Panc1 (cell line): ENCODE measurements at regions of chrX and their contacts with region 1.

Region 1: DNA sequence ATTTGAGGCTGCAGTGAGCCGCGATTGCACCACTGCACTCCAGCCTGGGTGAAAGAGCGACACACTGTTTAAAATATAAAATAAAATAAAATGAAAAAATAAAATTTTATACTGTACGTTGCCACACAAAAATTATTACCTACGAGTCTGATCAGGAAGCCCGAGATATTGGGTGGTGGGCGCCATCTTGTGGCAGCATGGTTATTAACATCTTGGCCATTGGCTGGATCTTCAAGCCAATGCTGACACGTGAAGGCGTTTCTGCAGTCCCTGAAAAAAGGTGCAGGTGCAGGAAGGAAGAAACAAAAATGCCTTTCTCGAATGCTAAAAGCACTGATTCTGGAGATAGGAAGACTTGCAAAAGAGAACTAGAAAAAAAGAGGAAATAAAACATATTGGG is 4.9 kb upstream of the TLR8 start:
- DNase-seq: no peak
- ATAC-seq: peak; percentile 62; the same call in 1 of the 2 replicates
- H3K4me3 ChIP-seq: no peak overlapping the region
- H3K27ac ChIP-seq: no peak overlapping the region
- H3K4me1 ChIP-seq: no peaks in the 10 kb centered on the region
- H3K27me3 ChIP-seq: no peaks in the 10 kb centered on the region
- CTCF ChIP-seq: peak; percentile 78

Region 2: DNA sequence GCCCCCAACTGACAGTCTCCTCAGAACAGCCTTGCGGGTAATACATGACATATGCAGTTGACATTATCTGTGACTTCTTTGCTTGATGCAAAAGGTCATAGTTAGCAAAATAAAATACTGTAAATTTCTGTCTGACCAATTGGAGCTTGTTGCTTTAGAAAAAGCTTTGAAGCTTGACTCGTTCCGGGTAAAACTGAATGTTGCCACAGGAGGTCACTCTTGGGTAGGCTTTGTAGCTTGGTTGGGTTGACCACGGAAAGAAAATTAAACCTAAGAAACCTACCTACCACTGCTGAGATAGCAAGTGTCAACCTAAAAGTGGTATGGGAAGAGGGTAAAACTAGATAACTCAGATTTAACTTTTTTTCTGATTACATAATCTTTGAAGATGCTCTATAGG is 87.1 kb before region 1 on chrX:
- CTCF ChIA-PET with region 1: no interaction called
- POLR2A ChIA-PET with region 1: no interaction called
- in situ Hi-C with region 1: no loop called
- intact Hi-C with region 1: loop called (anchors 5 kb)
- DNase-seq: peak; percentile 32
- ATAC-seq: no peak; the same call in 1 of the 2 replicates
- H3K4me3 ChIP-seq: no peak overlapping the region
- H3K27ac ChIP-seq: no peak overlapping the region
- H3K4me1 ChIP-seq: no peaks in the 10 kb centered on the region
- H3K27me3 ChIP-seq: no peaks in the 10 kb centered on the region
- CTCF ChIP-seq: peak; percentile 49

Region 3: GRCh38 chrX:13452283-13452682 is 550.8 kb after region 1 on chrX:
- CTCF ChIA-PET with region 1: no interaction called
- POLR2A ChIA-PET with region 1: no interaction called
- in situ Hi-C with region 1: no loop called
- intact Hi-C with region 1: no loop called
- DNase-seq: no peak
- ATAC-seq: no peak
- H3K4me3 ChIP-seq: no peak overlapping the region
- H3K27ac ChIP-seq: no peak overlapping the region
- H3K4me1 ChIP-seq: no peaks in the 10 kb centered on the region
- H3K27me3 ChIP-seq: no peaks in the 10 kb centered on the region
- CTCF ChIP-seq: no peak